BJ (cell line): ENCODE measurements at regions of chr12 and their contacts with region 1.

Region 1: DNA sequence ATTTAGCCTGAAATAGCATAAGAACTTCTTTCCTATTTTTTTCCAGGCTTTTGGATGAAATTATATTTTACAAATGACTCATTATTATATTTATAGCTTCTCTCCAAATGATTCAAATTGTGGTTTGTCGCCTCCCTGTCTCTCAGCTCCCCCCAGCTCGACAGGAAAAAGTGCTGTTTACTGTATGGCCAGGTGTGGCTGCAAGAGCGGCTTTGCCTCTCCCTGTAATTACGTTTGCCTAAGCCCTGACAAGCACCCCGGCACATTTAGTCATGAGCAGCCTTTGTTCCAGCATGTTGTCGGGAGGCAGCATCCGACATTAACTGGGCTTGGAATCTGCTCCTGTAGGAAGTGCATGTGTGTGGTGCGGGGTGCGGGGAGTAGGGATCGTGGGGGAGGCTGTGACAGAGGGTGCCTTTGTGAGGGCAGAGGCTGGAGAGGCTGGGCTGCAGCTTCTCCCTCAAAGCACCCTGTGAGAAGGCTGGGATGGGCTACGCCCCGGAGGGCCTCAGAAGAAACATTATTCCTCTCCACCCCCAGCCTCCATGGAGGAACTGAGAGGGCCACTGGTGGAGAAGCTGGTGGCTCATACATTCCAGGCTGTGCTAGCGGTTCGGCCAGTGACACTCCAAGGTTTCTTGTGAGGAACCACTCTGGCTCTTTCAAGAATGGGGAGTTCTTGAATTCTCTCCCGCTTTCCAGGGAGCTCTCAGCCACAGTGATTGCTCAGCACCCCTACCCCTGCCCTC is 42.1 kb upstream of the CTDSP2 start:
- DNase-seq: no peak
- H3K4me3 ChIP-seq: no peak overlapping the region
- H3K27me3 ChIP-seq: no peaks in the 10 kb centered on the region
- CTCF ChIP-seq: no peak

Region 2: GRCh38 chr12:57846577-57847319 is 41.8 kb before region 1 on chr12 and contains the start of gene CTDSP2:
- CTCF ChIA-PET with region 1: interaction called, 5 read pairs
- POLR2A ChIA-PET with region 1: interaction called, 11 read pairs
- DNase-seq: peak; percentile 71
- H3K4me3 ChIP-seq: peak within 1 kb of the TSS; percentile 100
- H3K27me3 ChIP-seq: no peaks in the 10 kb centered on the region
- CTCF ChIP-seq: 0 out of 2 replicates have a peak, but pooled peaks have one; percentile 5
- polyA plus RNA-seq, gene CTDSP2: 229 and 284 TPM in 2 replicates

Region 3: GRCh38 chr12:57935839-57936512 is 47.4 kb after region 1 on chr12:
- CTCF ChIA-PET with region 1: no interaction called
- POLR2A ChIA-PET with region 1: interaction called, 24 read pairs
- DNase-seq: peak; percentile 65
- H3K4me3 ChIP-seq: peak overlapping the region; percentile 53
- H3K27me3 ChIP-seq: no peaks in the 10 kb centered on the region
- CTCF ChIP-seq: no peak

Region 4: DNA sequence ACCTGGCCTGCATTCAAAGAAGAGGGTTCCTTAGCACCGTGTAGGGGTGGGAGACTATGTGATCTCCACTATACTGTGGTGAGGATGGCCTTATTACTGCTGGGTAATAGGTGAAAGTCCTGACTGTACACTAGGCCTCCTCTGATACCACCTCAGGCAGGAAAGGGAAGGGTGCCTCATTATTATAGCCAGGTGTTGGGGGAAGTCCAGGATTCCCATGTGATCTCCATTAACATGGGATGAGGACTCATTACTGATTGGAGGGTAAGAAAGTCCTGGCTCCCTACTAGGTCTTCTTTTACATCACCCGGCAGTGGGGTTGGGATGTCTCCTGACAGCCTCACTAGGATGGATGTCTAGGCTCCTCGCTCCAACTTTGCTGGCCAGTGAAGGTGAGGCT is 779.6 kb after region 1 on chr12:
- CTCF ChIA-PET with region 1: no interaction called
- POLR2A ChIA-PET with region 1: interaction called, 13 read pairs
- DNase-seq: no peak
- H3K4me3 ChIP-seq: no peak overlapping the region
- H3K27me3 ChIP-seq: no peaks in the 10 kb centered on the region
- CTCF ChIP-seq: no peak